Caco-2 (cell line): ENCODE measurements at regions of chr11 and their contacts with region 1.

Region 1: GRCh38 chr11:19553683-19554333 is 158.8 kb upstream of the NAV2 start:
- DNase-seq: peak; percentile 73 to 80
- H3K4me3 ChIP-seq: no peak overlapping the region
- H3K4me3 Mint-ChIP-seq: no peak overlapping the region
- H3K27ac Mint-ChIP-seq: no peak overlapping the region
- H3K4me1 ChIP-seq: peaks cover 13% of the 10 kb centered on the region
- H3K4me1 Mint-ChIP-seq: peaks cover 8% of the 10 kb centered on the region
- H3K27me3 ChIP-seq: no peaks in the 10 kb centered on the region
- H3K27me3 Mint-ChIP-seq: no peaks in the 10 kb centered on the region
- CTCF ChIP-seq: peak; percentile 85 to 89

Region 2: DNA sequence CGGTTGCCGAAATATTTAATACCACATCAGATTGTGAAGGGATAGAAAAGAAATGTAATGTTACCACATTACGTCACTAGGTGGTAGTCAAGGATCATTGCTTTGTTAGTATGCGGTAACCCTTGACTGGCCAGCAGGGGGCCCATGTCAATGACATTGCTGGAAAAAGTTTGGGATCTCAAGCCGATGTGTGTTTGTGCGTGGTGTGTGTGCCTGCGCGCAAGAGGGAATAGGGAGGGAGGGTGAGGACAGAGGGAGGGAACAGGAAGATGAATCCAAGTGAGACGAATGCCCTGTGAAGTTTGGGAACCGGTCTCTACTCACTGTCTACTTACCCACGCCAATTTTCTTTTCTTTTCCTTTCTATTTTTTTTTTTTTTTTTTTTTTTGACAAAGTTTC is 482.6 kb before region 1 on chr11:
- CTCF ChIA-PET with region 1: interaction called, 3 read pairs
- POLR2A ChIA-PET with region 1: no interaction called
- intact Hi-C with region 1: loop called (anchors 2 kb)
- DNase-seq: peak; percentile 83 to 84
- H3K4me3 ChIP-seq: no peak overlapping the region
- H3K4me3 Mint-ChIP-seq: peak overlapping the region; percentile 29
- H3K27ac Mint-ChIP-seq: no peak overlapping the region
- H3K4me1 ChIP-seq: no peaks in the 10 kb centered on the region; the same call in 1 of the 2 replicates
- H3K4me1 Mint-ChIP-seq: peaks cover 15% of the 10 kb centered on the region
- H3K27me3 ChIP-seq: no peaks in the 10 kb centered on the region
- H3K27me3 Mint-ChIP-seq: peaks cover 8% of the 10 kb centered on the region
- CTCF ChIP-seq: peak; percentile 99

Region 3: GRCh38 chr11:19259487-19260345 is 294.1 kb before region 1 on chr11:
- CTCF ChIA-PET with region 1: no interaction called
- POLR2A ChIA-PET with region 1: no interaction called
- intact Hi-C with region 1: loop called (anchors 1 kb)
- DNase-seq: peak; percentile 62 to 73
- H3K4me3 ChIP-seq: no peak overlapping the region
- H3K4me3 Mint-ChIP-seq: no peak overlapping the region
- H3K27ac Mint-ChIP-seq: no peak overlapping the region
- H3K4me1 ChIP-seq: no peaks in the 10 kb centered on the region
- H3K4me1 Mint-ChIP-seq: peaks cover 7% of the 10 kb centered on the region
- H3K27me3 ChIP-seq: no peaks in the 10 kb centered on the region
- H3K27me3 Mint-ChIP-seq: no peaks in the 10 kb centered on the region
- CTCF ChIP-seq: peak; percentile 94 to 96

Region 4: GRCh38 chr11:19326499-19326898 is 227.3 kb before region 1 on chr11:
- CTCF ChIA-PET with region 1: interaction called, 11 read pairs
- POLR2A ChIA-PET with region 1: no interaction called
- intact Hi-C with region 1: loop called (anchors 1 kb)
- DNase-seq: no peak
- H3K4me3 ChIP-seq: no peak overlapping the region
- H3K4me3 Mint-ChIP-seq: no peak overlapping the region
- H3K27ac Mint-ChIP-seq: no peak overlapping the region
- H3K4me1 ChIP-seq: no peaks in the 10 kb centered on the region
- H3K4me1 Mint-ChIP-seq: no peaks in the 10 kb centered on the region
- H3K27me3 ChIP-seq: no peaks in the 10 kb centered on the region
- H3K27me3 Mint-ChIP-seq: peaks cover 5% of the 10 kb centered on the region
- CTCF ChIP-seq: peak in 1 of 2 experiments; percentile 24

Region 5: GRCh38 chr11:19508159-19508558 is 45.6 kb before region 1 on chr11:
- CTCF ChIA-PET with region 1: no interaction called
- POLR2A ChIA-PET with region 1: no interaction called
- intact Hi-C with region 1: loop called (anchors 5 kb)
- DNase-seq: peak; percentile 64 to 77
- H3K4me3 ChIP-seq: no peak overlapping the region
- H3K4me3 Mint-ChIP-seq: no peak overlapping the region
- H3K27ac Mint-ChIP-seq: peak overlapping the region; percentile 40
- H3K4me1 ChIP-seq: peaks cover 36% of the 10 kb centered on the region
- H3K4me1 Mint-ChIP-seq: peaks cover 29% of the 10 kb centered on the region
- H3K27me3 ChIP-seq: no peaks in the 10 kb centered on the region
- H3K27me3 Mint-ChIP-seq: no peaks in the 10 kb centered on the region
- CTCF ChIP-seq: no peak

Region 6: GRCh38 chr11:19742588-19743292 is 188.9 kb after region 1 on chr11:
- CTCF ChIA-PET with region 1: interaction called, 9 read pairs
- POLR2A ChIA-PET with region 1: no interaction called
- intact Hi-C with region 1: loop called (anchors 1 kb)
- DNase-seq: peak; percentile 82 to 84
- H3K4me3 ChIP-seq: no peak overlapping the region
- H3K4me3 Mint-ChIP-seq: no peak overlapping the region
- H3K27ac Mint-ChIP-seq: no peak overlapping the region
- H3K4me1 ChIP-seq: no peaks in the 10 kb centered on the region
- H3K4me1 Mint-ChIP-seq: no peaks in the 10 kb centered on the region
- H3K27me3 ChIP-seq: no peaks in the 10 kb centered on the region
- H3K27me3 Mint-ChIP-seq: no peaks in the 10 kb centered on the region
- CTCF ChIP-seq: peak; percentile 77 to 86